HCT116 (cell line): ENCODE measurements at regions of chr3 and their contacts with region 1.

Region 1: GRCh38 chr3:64533617-64534317 is 154.0 kb downstream of the ADAMTS9 start:
- DNase-seq: peak; percentile 80
- ATAC-seq: peak; percentile 97
- H3K4me3 ChIP-seq: no peak overlapping the region
- H3K27ac ChIP-seq: no peak overlapping the region
- H3K4me1 ChIP-seq: peaks cover 0 to 2% of the 10 kb centered on the region in 2 experiments; a peak in 1 of 4 replicates
- H3K27me3 ChIP-seq: peaks cover 37% of the 10 kb centered on the region; the same call in 1 of the 2 replicates
- CTCF ChIP-seq: peak; percentile 64 to 88 (median 79); a peak in 5 of 6 replicates
- POLR2A ChIP-seq: no peak
- RAD21 ChIP-seq: peak; percentile 88

Region 2: GRCh38 chr3:64518950-64519349 is 14.8 kb before region 1 on chr3:
- CTCF ChIA-PET with region 1: interaction called, 11 read pairs
- POLR2A ChIA-PET with region 1: no interaction called
- RAD21 ChIA-PET with region 1: no interaction called
- intact Hi-C with region 1: no loop called
- DNase-seq: no peak
- ATAC-seq: no peak
- H3K4me3 ChIP-seq: no peak overlapping the region
- H3K27ac ChIP-seq: no peak overlapping the region
- H3K4me1 ChIP-seq: no peaks in the 10 kb centered on the region
- H3K27me3 ChIP-seq: peaks cover 3% of the 10 kb centered on the region
- CTCF ChIP-seq: no peak
- POLR2A ChIP-seq: no peak
- RAD21 ChIP-seq: no peak

Region 3: GRCh38 chr3:64584179-64584578 is 50.4 kb after region 1 on chr3:
- CTCF ChIA-PET with region 1: no interaction called
- POLR2A ChIA-PET with region 1: no interaction called
- RAD21 ChIA-PET with region 1: no interaction called
- intact Hi-C with region 1: no loop called
- DNase-seq: no peak
- ATAC-seq: no peak
- H3K4me3 ChIP-seq: no peak overlapping the region
- H3K27ac ChIP-seq: no peak overlapping the region
- H3K4me1 ChIP-seq: no peaks in the 10 kb centered on the region
- H3K27me3 ChIP-seq: peaks cover 11% of the 10 kb centered on the region
- CTCF ChIP-seq: no peak
- POLR2A ChIP-seq: no peak
- RAD21 ChIP-seq: no peak

Region 4: DNA sequence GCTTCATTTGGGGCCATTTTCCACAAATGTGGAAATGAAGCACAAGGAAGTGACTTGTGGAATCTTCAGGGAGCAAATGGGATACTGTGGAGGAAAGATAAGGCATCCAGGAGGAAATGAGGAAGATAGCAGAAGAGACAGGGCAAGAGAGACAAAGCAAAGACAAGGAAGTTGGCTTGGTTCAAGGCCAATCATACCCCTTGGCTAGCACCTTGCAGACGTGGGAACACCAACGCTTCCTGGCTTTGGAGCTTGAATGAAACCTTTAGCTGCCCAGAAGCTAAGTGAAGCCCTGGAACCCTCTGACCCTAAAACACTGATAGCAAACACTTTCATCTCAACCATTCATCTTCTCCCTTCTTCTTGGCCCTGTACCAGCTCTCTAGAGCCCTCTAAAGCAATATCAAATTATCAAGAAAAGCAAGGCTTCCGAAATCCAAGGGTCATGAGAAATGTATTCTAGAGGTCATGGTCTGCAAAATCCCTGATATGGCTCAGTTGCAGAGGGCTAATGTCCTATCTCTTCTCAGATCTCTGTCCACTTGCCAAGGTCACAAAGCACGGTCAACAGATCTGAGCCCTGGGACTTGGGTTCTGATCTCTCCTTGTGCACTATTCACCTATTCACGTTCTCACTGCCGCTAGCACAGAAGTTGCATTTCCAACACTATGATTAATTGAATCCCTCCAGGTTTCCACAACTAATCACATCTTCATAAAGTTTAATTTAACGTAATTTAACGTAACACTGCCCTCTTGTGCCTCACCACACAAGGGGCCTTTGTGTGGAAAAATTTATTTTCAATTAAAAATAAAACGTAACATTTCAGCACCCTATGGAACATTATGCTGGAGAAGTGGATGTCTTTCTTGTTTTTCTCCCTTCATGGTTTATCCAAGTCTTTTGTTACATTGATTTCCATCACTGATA is 711.6 kb after region 1 on chr3:
- CTCF ChIA-PET with region 1: no interaction called
- POLR2A ChIA-PET with region 1: no interaction called
- RAD21 ChIA-PET with region 1: no interaction called
- intact Hi-C with region 1: loop called (anchors 2 kb)
- DNase-seq: no peak
- ATAC-seq: no peak
- H3K4me3 ChIP-seq: no peak overlapping the region
- H3K27ac ChIP-seq: no peak overlapping the region
- H3K4me1 ChIP-seq: no peaks in the 10 kb centered on the region
- H3K27me3 ChIP-seq: peaks cover 4% of the 10 kb centered on the region
- CTCF ChIP-seq: peak; percentile 18 to 34 (median 20); a peak in 3 of 6 replicates
- POLR2A ChIP-seq: no peak
- RAD21 ChIP-seq: peak; percentile 36; the same call in 1 of the 2 replicates

Region 5: GRCh38 chr3:65439641-65440284 is 906.0 kb after region 1 on chr3:
- CTCF ChIA-PET with region 1: interaction called, 4 read pairs
- POLR2A ChIA-PET with region 1: no interaction called
- RAD21 ChIA-PET with region 1: no interaction called
- intact Hi-C with region 1: loop called (anchors 1 kb)
- DNase-seq: peak; percentile 6
- ATAC-seq: peak; percentile 92
- H3K4me3 ChIP-seq: no peak overlapping the region
- H3K27ac ChIP-seq: no peak overlapping the region
- H3K4me1 ChIP-seq: no peaks in the 10 kb centered on the region
- H3K27me3 ChIP-seq: no peaks in the 10 kb centered on the region
- CTCF ChIP-seq: peak; percentile 18 to 50 (median 49); a peak in 4 of 6 replicates
- POLR2A ChIP-seq: no peak
- RAD21 ChIP-seq: peak; percentile 53

Region 6: GRCh38 chr3:65751123-65751700 is 1217.4 kb after region 1 on chr3:
- CTCF ChIA-PET with region 1: no interaction called
- POLR2A ChIA-PET with region 1: no interaction called
- RAD21 ChIA-PET with region 1: no interaction called
- intact Hi-C with region 1: loop called (anchors 5 kb)
- DNase-seq: peak; percentile 3
- ATAC-seq: peak; percentile 88
- H3K4me3 ChIP-seq: no peak overlapping the region
- H3K27ac ChIP-seq: no peak overlapping the region
- H3K4me1 ChIP-seq: no peaks in the 10 kb centered on the region
- H3K27me3 ChIP-seq: no peaks in the 10 kb centered on the region
- CTCF ChIP-seq: peak; percentile 21 to 76 (median 74); a peak in 4 of 6 replicates
- POLR2A ChIP-seq: no peak
- RAD21 ChIP-seq: peak; percentile 47

Region 7: DNA sequence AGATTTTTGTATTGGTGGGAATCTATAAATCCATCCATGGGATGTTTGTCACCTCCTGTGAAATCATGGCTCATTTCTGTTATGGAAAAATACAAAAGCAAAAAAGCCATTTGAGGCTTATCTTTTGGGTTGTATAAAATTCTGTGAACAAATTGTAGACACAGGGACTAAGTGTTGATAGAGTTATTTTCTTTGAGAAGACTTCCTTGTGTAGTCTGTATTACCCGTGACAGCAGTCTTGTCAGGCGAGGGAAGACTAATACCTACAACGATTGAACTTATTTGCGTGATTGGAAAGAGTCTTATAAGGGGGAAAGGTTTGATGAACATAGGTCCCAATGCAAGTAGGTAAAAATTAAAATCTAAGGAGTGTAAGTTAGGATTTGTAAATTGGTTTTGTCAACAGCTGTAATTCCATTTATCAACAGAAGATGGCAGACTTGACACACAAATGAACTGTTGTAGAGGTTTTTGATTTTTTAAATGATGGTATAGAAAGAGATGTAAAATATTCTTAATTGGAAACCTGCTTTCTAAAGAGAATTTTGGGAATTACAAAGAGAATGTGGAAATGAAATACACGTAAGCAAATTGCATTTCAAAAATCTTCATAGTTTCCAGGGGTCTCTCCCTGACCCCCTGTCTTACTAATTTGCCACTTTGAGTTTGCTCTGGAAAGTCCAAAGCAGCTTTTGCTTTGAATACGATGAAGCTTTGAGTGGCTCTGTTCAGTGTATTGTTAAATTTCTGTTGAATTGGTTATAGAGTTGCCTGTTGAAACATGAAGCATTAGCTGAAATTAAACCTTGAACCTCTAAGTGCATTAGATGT is 1720.2 kb after region 1 on chr3:
- CTCF ChIA-PET with region 1: no interaction called
- POLR2A ChIA-PET with region 1: no interaction called
- RAD21 ChIA-PET with region 1: no interaction called
- intact Hi-C with region 1: loop called (anchors 5 kb)
- DNase-seq: peak; percentile 32
- ATAC-seq: no peak
- H3K4me3 ChIP-seq: no peak overlapping the region
- H3K27ac ChIP-seq: no peak overlapping the region
- H3K4me1 ChIP-seq: no peaks in the 10 kb centered on the region
- H3K27me3 ChIP-seq: no peaks in the 10 kb centered on the region
- CTCF ChIP-seq: peak; percentile 36 to 79 (median 39); a peak in 4 of 6 replicates
- POLR2A ChIP-seq: no peak
- RAD21 ChIP-seq: peak; percentile 57; the same call in 1 of the 2 replicates